CD8-positive, alpha-beta T cell (primary cell): ENCODE measurements at regions of chr1 and their contacts with region 1.

Region 1: GRCh38 chr1:111570781-111571181 is 48.8 kb upstream of the RAP1A start:
- DNase-seq: peak; percentile 10 to 68 (median 30)
- ATAC-seq: peak; percentile 63
- H3K4me3 ChIP-seq: no peak overlapping the region
- H3K4me3 Mint-ChIP-seq: no peak overlapping the region
- H3K27ac ChIP-seq: no peak overlapping the region
- H3K27ac Mint-ChIP-seq: no peak overlapping the region
- H3K4me1 ChIP-seq: no peaks in the 10 kb centered on the region
- H3K4me1 Mint-ChIP-seq: peaks cover 8% of the 10 kb centered on the region
- H3K27me3 ChIP-seq: no peaks in the 10 kb centered on the region
- H3K27me3 Mint-ChIP-seq: no peaks in the 10 kb centered on the region
- CTCF ChIP-seq: no peak

Region 2: DNA sequence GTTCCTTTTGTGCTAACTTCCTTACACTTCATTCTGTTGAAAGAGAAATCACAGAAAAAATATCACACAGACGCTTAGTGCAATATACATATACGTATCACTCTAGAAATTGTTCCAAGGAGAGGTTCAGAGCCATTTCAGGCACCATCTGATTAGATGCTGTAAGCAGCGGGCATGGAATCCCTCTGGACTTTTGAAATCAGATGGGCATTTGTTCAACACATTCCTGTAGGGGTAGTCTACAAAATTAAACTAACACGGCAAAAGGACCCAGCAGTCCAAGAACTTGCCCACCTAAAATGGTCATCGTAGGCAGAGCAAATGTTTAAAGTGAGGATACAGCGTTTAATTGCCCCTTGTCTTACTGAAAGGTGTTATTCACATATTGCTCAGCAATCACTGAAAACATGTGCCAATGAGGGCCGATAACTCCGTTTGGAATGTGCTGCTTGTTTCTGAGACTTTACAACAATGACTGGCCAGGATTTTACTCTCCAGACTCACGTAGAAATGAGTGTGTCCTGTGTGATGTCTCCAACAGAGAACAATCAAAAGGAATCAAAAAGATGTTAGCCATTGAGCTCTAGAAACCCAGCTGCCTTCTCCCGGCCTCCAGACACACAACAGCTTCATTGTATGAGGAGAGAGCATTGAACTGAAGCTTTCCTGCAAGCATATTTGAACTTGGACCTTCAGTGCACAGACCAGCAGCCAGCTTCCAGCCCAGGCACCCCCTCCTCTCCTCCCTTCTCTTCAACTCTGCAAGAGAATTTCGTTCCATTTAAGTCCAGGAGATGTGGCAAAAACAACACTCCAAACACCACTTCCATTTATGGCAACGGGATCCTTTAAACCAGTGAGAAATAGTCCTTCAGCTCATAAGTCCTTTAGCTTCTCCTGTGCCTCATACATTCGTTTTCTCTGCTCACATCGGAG is 35.3 kb before region 1 on chr1:
- CTCF ChIA-PET with region 1: no interaction called
- POLR2A ChIA-PET with region 1: no interaction called
- intact Hi-C with region 1: no loop called
- DNase-seq: no peak
- ATAC-seq: no peak
- H3K4me3 ChIP-seq: no peak overlapping the region
- H3K4me3 Mint-ChIP-seq: no peak overlapping the region
- H3K27ac ChIP-seq: no peak overlapping the region
- H3K27ac Mint-ChIP-seq: no peak overlapping the region
- H3K4me1 ChIP-seq: no peaks in the 10 kb centered on the region
- H3K4me1 Mint-ChIP-seq: no peaks in the 10 kb centered on the region
- H3K27me3 ChIP-seq: no peaks in the 10 kb centered on the region
- H3K27me3 Mint-ChIP-seq: no peaks in the 10 kb centered on the region
- CTCF ChIP-seq: no peak

Region 3: GRCh38 chr1:111648806-111649205 is 78.0 kb after region 1 on chr1:
- CTCF ChIA-PET with region 1: interaction called, 4 read pairs
- POLR2A ChIA-PET with region 1: no interaction called
- intact Hi-C with region 1: loop called in 1 of 2 experiments (anchors 5 kb)
- DNase-seq: no peak
- ATAC-seq: no peak
- H3K4me3 ChIP-seq: no peak overlapping the region
- H3K4me3 Mint-ChIP-seq: peak overlapping the region; percentile 49
- H3K27ac ChIP-seq: peak overlapping the region in 1 of 2 experiments; percentile 13
- H3K27ac Mint-ChIP-seq: peak overlapping the region; percentile 90
- H3K4me1 ChIP-seq: peaks cover 74% of the 10 kb centered on the region
- H3K4me1 Mint-ChIP-seq: peaks cover 85% of the 10 kb centered on the region
- H3K27me3 ChIP-seq: no peaks in the 10 kb centered on the region
- H3K27me3 Mint-ChIP-seq: no peaks in the 10 kb centered on the region
- CTCF ChIP-seq: no peak

Region 4: DNA sequence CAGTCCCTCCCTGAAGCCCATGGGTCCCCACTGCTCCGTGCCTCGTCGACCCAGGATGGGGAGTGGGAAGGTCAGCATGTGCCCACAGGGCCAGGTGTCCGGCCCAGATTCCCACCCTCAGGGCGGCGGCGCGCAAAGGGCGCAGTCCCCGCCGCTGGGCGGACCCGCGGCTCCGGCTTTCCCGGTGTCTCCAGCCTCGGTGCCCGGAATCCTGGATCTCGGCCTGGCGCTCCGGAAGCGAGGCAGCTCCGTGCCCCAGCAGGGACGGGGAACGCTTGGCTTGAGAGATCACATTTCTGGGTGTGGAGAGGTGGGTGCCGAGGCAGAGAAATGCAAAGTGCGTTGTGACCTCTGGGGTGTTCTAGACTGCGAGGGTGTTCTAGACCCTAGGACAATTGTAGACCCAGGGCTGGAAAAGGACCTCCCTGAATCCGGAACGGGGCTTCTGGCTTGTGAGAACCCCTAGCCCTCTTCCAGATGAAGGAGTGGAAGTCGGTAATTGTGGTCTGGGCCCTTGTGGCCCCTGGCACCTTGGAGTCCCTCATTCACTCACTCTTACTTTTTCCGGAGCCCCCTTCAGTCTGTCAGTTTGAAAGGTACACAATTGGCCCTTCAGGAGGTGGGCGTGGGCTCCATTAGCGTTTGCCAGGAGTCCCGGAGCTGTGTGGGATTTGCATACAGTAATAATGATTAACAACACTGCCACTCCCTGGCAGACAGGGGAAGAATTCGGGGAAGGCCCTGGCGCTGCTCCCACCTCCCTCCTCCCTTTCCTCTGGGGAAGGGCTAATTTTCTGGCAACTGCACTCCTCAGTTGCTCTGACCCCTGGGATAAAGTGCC is 420.3 kb after region 1 on chr1:
- CTCF ChIA-PET with region 1: no interaction called
- POLR2A ChIA-PET with region 1: no interaction called
- intact Hi-C with region 1: no loop called
- DNase-seq: no peak
- ATAC-seq: no peak
- H3K4me3 ChIP-seq: no peak overlapping the region
- H3K4me3 Mint-ChIP-seq: peak overlapping the region; percentile 45
- H3K27ac ChIP-seq: no peak overlapping the region
- H3K27ac Mint-ChIP-seq: no peak overlapping the region
- H3K4me1 ChIP-seq: no peaks in the 10 kb centered on the region
- H3K4me1 Mint-ChIP-seq: peaks cover 16% of the 10 kb centered on the region
- H3K27me3 ChIP-seq: peaks cover 8 to 18% of the 10 kb centered on the region in 2 experiments
- H3K27me3 Mint-ChIP-seq: peaks cover 54% of the 10 kb centered on the region
- CTCF ChIP-seq: no peak